ENCODE measurements at regions of chr3 and their contacts with region 1.

Region 1: DNA sequence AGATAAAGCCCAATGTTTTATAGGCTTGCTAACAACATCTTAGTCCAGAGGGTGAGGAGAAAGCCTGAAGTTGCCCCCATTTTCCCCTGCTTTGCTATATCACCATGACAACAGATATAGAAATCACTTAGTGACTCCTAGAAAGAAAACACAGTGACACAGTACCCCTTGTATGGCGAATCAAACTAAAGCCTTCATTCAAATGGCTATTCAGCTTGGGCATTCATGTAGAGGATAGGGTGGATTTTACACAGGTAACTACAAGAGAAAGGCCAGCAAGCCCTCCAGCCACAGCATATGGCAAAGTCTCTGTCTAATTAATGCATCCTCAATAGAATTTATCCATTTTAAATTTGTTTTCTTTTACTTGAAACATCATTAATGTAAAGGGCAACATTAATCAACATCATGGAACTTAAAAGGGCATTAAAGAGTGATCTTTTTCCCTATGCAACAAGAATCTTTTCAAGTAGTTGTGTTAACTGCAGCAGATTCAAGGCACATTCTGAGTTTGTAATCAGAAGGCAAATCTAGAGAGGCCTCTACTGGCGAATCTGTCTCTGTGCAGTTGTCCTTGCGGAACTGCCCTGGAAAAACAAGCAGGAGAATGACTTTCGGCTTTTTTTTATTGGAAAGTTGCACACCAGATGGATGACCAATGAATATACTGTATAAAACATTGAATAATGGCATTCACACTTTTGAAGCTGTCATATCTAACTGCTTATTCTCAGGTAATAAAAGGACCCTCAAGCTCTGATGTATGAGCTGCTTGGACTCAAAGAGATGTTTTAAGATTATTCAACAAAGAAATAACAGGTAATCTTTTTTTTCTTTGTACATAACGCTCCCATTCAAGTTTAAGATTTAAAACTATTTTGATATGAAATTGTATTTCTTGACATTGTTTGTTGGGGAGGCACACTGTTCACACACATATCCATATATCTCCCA is 621.7 kb upstream of the AGTR1 start:
- DNase-seq: no peak
- ATAC-seq: peak; percentile 62
- H3K4me3 ChIP-seq: no peak overlapping the region
- H3K27ac ChIP-seq: no peak overlapping the region
- H3K4me1 ChIP-seq: no peaks in the 10 kb centered on the region
- H3K27me3 ChIP-seq: no peaks in the 10 kb centered on the region
- CTCF ChIP-seq: peak; percentile 23 to 49 (median 47); a peak in 4 of 6 replicates
- EP300 ChIP-seq: no peak
- POLR2A ChIP-seq: no peak
- RAD21 ChIP-seq: peak; percentile 49

Region 2: DNA sequence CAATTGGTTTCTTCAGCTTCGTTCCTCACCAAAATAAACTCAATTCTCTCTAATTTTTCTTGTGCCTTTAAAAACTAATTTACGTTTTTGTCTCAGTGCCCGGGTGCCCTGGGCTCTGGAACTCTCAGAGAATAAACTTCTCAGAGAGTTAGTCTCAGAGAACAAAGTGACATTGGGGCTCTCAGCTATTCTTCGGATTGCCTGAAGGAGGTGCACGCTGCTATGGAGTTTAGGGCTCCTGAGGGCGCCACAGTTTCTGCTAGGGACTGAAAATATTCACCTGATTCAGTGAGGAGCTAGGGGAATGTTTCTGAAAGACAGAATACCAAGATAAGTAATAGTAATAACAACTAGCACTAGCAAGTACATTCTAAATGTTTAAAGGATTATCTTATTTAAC is 692.4 kb before region 1 on chr3:
- CTCF ChIA-PET with region 1: interaction called, 47 read pairs
- POLR2A ChIA-PET with region 1: no interaction called
- RAD21 ChIA-PET with region 1: interaction called, 20 read pairs
- SMC1A ChIA-PET with region 1: interaction called, 25 read pairs
- in situ Hi-C with region 1: no loop called
- intact Hi-C with region 1: loop called (anchors 5 kb)
- DNase-seq: no peak
- ATAC-seq: peak; percentile 73
- H3K4me3 ChIP-seq: no peak overlapping the region
- H3K27ac ChIP-seq: no peak overlapping the region
- H3K4me1 ChIP-seq: no peaks in the 10 kb centered on the region
- H3K27me3 ChIP-seq: peaks cover 1 to 6% of the 10 kb centered on the region in 2 experiments; a peak in 3 of 4 replicates
- CTCF ChIP-seq: peak; percentile 22 to 33 (median 31); a peak in 4 of 6 replicates
- EP300 ChIP-seq: no peak
- POLR2A ChIP-seq: no peak
- RAD21 ChIP-seq: peak; percentile 57

Region 3: DNA sequence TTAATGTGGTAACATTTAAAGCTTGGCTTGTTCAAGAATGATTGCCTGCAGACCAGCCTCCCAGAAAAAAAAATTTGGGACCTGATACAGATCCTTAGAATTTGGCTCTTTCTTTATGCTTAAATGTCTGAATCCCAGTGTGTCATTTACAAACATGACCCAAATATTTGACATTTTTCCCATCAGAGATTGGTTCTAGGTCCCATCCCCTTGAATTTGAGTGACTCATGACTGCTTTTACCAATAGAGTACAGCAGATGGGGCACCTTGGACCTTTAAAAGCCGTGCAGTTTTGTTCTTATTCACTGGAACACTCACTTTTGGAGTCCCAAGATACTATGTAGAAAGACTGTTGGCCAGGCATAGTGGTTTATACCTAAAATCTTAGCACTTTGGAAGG is 435.3 kb before region 1 on chr3:
- CTCF ChIA-PET with region 1: interaction called, 8 read pairs
- POLR2A ChIA-PET with region 1: no interaction called
- RAD21 ChIA-PET with region 1: interaction called, 7 read pairs
- SMC1A ChIA-PET with region 1: interaction called, 11 read pairs
- in situ Hi-C with region 1: no loop called
- intact Hi-C with region 1: no loop called
- DNase-seq: no peak
- ATAC-seq: no peak; the same call in 2 of the 3 replicates
- H3K4me3 ChIP-seq: no peak overlapping the region
- H3K27ac ChIP-seq: no peak overlapping the region
- H3K4me1 ChIP-seq: no peaks in the 10 kb centered on the region
- H3K27me3 ChIP-seq: no peaks in the 10 kb centered on the region
- CTCF ChIP-seq: 0 out of 6 replicates have a peak, but pooled peaks of 1 of the 3 experiments have one; percentile 1
- EP300 ChIP-seq: no peak
- POLR2A ChIP-seq: no peak
- RAD21 ChIP-seq: no peak

Region 4: GRCh38 chr3:148062590-148062989 is 13.4 kb before region 1 on chr3:
- CTCF ChIA-PET with region 1: interaction called, 22 read pairs
- POLR2A ChIA-PET with region 1: no interaction called
- RAD21 ChIA-PET with region 1: interaction called, 11 read pairs
- SMC1A ChIA-PET with region 1: interaction called, 4 read pairs
- in situ Hi-C with region 1: no loop called
- intact Hi-C with region 1: no loop called
- DNase-seq: no peak
- ATAC-seq: no peak
- H3K4me3 ChIP-seq: no peak overlapping the region
- H3K27ac ChIP-seq: no peak overlapping the region
- H3K4me1 ChIP-seq: no peaks in the 10 kb centered on the region
- H3K27me3 ChIP-seq: no peaks in the 10 kb centered on the region
- CTCF ChIP-seq: no peak
- EP300 ChIP-seq: no peak
- POLR2A ChIP-seq: no peak
- RAD21 ChIP-seq: no peak

Measured in GM12878 (cell line).